Naive thymus-derived CD4-positive, alpha-beta T cell (primary cell): ENCODE measurements at regions of chr15 and their contacts with region 1.

Region 1: GRCh38 chr15:44598892-44599291 is 61.9 kb downstream of the EIF3J start:
- DNase-seq: no peak
- ATAC-seq: no peak
- H3K4me3 ChIP-seq: no peak overlapping the region
- H3K4me3 Mint-ChIP-seq: no peak overlapping the region
- H3K27ac ChIP-seq: peak overlapping the region; percentile 13
- H3K27ac Mint-ChIP-seq: peak overlapping the region in 8 of 9 donors; percentile 6 to 82 (median 58)
- H3K4me1 ChIP-seq: peaks cover 0 to 9% of the 10 kb centered on the region in 2 donors
- H3K4me1 Mint-ChIP-seq: peaks cover 7 to 27% (median 16%) of the 10 kb centered on the region in 7 donors
- H3K27me3 ChIP-seq: no peaks in the 10 kb centered on the region
- H3K27me3 Mint-ChIP-seq: no peaks in the 10 kb centered on the region

Region 2: GRCh38 chr15:44394062-44394461 is 204.8 kb before region 1 on chr15:
- CTCF ChIA-PET with region 1: no interaction called
- POLR2A ChIA-PET with region 1: no interaction called
- intact Hi-C with region 1: no loop called
- DNase-seq: no peak
- ATAC-seq: no peak
- H3K4me3 ChIP-seq: no peak overlapping the region
- H3K4me3 Mint-ChIP-seq: no peak overlapping the region
- H3K27ac ChIP-seq: no peak overlapping the region
- H3K27ac Mint-ChIP-seq: no peak overlapping the region
- H3K4me1 ChIP-seq: no peaks in the 10 kb centered on the region
- H3K4me1 Mint-ChIP-seq: peaks cover 0 to 10% (median 0%) of the 10 kb centered on the region in 7 donors
- H3K27me3 ChIP-seq: no peaks in the 10 kb centered on the region
- H3K27me3 Mint-ChIP-seq: no peaks in the 10 kb centered on the region

Region 3: DNA sequence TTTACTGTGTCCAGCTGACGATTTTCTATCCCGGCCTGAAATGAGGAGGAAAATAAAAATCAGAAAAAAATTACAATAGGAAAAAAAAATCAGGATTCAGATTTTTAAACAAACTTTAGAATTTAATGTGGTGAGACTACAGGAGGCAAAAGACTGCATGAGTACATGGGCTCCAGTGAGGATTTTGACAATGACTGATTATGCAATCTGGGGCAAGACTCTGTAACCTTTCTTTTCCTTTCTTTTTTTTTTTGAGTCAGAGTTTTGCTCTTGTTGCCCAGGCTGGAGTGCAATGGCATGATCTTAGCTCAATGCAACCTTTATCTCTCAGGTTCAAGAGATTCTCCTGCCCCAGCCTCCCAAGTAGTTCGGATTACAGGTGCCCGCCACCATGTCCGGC is 34.7 kb after region 1 on chr15:
- CTCF ChIA-PET with region 1: interaction called, 4 read pairs
- POLR2A ChIA-PET with region 1: no interaction called
- intact Hi-C with region 1: loop called in 1 of 2 experiments (anchors 5 kb)
- DNase-seq: no peak
- ATAC-seq: no peak
- H3K4me3 ChIP-seq: no peak overlapping the region
- H3K4me3 Mint-ChIP-seq: peak overlapping the region in 1 of 10 donors; percentile 51
- H3K27ac ChIP-seq: no peak overlapping the region
- H3K27ac Mint-ChIP-seq: peak overlapping the region in 4 of 9 donors; percentile 48 to 81 (median 56)
- H3K4me1 ChIP-seq: no peaks in the 10 kb centered on the region
- H3K4me1 Mint-ChIP-seq: peaks cover 0 to 11% (median 5%) of the 10 kb centered on the region in 7 donors
- H3K27me3 ChIP-seq: no peaks in the 10 kb centered on the region
- H3K27me3 Mint-ChIP-seq: no peaks in the 10 kb centered on the region

Region 4: DNA sequence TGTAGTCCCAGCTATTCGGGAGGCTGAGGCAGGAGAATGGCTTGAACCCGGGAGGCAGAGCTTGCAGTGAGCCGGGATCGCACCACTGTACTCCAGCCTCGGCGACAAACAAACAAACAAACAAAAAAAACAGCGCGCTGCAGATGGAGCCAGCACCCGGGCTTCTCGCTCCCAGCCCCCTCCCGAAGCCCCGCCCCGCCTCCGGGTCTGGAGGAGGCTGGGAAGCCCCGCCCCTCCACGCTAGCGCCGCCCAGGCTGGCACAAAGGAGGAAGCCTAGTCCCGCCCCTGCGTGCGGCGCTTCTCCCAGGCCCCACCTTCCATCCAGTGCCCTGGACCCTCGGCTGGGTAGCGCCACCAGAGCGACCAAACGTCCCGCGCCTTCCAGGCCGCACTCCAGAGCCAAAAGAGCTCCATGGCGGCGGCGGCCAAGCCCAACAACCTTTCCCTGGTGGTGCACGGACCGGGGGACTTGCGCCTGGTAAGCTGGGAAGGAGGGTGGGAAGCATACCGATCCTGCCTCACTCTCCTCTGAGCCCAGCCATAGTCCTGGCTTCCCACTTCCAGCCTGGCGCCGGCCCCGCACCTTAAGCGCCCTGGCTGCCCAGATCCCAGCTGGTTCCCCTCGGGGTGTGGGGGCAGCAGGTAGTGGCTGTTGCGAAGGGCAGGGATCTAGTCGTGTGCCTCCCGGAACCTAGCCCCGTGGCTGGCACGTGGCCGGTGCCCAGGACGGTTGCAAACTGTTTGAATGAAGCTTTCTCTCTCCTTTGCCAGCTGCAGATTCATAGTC is 424.2 kb after region 1 on chr15 and contains the start of gene SORD:
- CTCF ChIA-PET with region 1: no interaction called
- POLR2A ChIA-PET with region 1: no interaction called
- intact Hi-C with region 1: loop called in 1 of 2 experiments (anchors 5 kb)
- DNase-seq: peak; percentile 77 to 96 (median 83)
- ATAC-seq: peak; percentile 99
- H3K4me3 ChIP-seq: peak within 1 kb of the TSS; percentile 83
- H3K4me3 Mint-ChIP-seq: peak within 1 kb of the TSS; percentile 80 to 93 (median 88)
- H3K27ac ChIP-seq: peak within 1 kb of the TSS; percentile 42
- H3K27ac Mint-ChIP-seq: peak within 1 kb of the TSS; percentile 14 to 86 (median 60)
- H3K4me1 ChIP-seq: peaks cover 8 to 10% of the 10 kb centered on the region in 2 donors
- H3K4me1 Mint-ChIP-seq: peaks cover 12 to 32% (median 17%) of the 10 kb centered on the region in 7 donors
- H3K27me3 ChIP-seq: no peaks in the 10 kb centered on the region
- H3K27me3 Mint-ChIP-seq: peaks cover 12 to 28% (median 21%) of the 10 kb centered on the region in 5 donors
- total RNA-seq, gene SORD: 2.7 to 7.8 (median 6.4) TPM